Activated CD4-positive, alpha-beta memory T cell treated with anti-CD3 and anti-CD28 coated beads for 36 hours (primary cell): ENCODE measurements at regions of chr12 and their contacts with region 1.

Region 1: GRCh38 chr12:6771091-6771495 is 1.2 kb upstream of the LAG3 start:
- DNase-seq: peak; percentile 55
- H3K4me3 Mint-ChIP-seq: no peak overlapping the region
- H3K27ac Mint-ChIP-seq: peak overlapping the region; percentile 84
- H3K4me1 Mint-ChIP-seq: peaks cover 57% of the 10 kb centered on the region
- H3K27me3 Mint-ChIP-seq: peaks cover 13% of the 10 kb centered on the region

Region 2: GRCh38 chr12:6786416-6787094 is 15.5 kb after region 1 on chr12:
- CTCF ChIA-PET with region 1: interaction called, 47 read pairs
- POLR2A ChIA-PET with region 1: interaction called, 19 read pairs
- intact Hi-C with region 1: loop called (anchors 2 kb)
- DNase-seq: peak; percentile 34
- H3K4me3 Mint-ChIP-seq: peak overlapping the region; percentile 51
- H3K27ac Mint-ChIP-seq: peak overlapping the region; percentile 81
- H3K4me1 Mint-ChIP-seq: peaks cover 62% of the 10 kb centered on the region
- H3K27me3 Mint-ChIP-seq: no peaks in the 10 kb centered on the region

Region 3: DNA sequence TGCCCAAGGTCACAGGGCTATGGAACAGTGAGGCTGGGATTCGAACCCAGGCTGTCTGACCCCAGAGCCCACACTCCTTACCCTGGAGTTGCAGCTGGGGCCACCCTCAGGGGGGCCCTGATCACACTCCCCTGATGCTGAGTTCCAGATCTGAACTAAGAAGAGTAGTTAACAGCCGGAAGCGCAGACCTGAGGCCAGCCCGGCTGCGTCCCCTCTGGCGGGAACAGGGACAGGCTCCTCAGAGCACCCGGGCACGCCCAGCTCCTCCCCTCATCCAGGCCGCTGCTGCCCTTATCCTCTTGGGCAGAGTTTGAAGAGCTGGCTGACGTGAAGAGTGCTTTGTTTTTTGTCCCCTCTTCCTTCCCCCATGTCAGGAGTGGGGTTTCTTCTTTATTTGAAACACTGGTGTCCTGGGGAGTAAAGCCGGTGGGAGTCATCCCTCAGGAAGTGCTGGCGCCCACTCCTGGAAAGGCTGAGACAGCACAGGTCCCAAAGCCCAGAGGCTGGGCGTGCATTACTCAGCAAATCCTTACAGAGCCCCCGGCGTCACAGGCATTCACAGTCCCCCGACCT is 190.7 kb after region 1 on chr12:
- CTCF ChIA-PET with region 1: no interaction called
- POLR2A ChIA-PET with region 1: no interaction called
- intact Hi-C with region 1: no loop called
- DNase-seq: peak; percentile 80
- H3K4me3 Mint-ChIP-seq: peak overlapping the region; percentile 75
- H3K27ac Mint-ChIP-seq: peak overlapping the region; percentile 97
- H3K4me1 Mint-ChIP-seq: peaks cover 82% of the 10 kb centered on the region
- H3K27me3 Mint-ChIP-seq: no peaks in the 10 kb centered on the region

Region 4: DNA sequence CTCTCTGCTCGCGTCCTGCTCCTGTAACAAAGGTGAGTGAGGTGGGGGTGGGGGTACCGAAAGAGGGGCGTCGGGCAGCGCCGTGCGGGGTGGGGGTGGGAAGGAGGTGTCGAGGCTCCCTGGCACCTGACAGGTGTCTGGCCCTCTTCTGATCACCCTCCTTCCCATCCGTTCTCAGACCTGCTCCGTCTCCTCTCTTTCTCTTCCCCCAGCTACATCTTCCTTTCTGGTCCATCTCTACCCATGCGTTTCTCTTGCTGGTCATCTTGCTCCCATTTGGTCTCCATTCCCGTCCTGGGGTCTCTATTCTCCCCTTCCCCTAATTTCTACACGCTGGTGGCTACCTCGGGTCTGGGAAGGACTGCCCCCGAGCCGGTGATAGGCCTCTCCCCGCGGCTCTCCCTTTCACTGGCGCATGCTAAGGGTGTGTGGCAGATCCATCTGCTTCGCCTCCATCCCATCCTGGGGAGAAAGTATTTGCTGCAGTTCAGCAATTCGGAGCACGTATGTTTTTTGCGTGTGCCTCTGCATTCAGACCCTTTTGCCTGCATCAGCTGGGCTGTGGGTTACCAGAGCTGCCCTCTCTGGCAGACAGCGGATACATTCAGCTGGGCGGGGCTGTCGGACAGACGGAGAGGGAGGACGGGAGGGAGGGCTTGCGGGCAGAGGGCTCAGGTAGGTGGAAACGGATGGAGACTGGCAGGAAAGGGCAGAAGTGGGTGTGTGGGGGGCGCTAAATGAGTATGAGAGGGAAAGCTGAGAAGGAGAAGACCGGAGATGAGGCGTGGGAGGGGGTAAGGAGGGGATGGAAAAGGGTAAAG is 359.8 kb after region 1 on chr12:
- CTCF ChIA-PET with region 1: no interaction called
- POLR2A ChIA-PET with region 1: no interaction called
- intact Hi-C with region 1: no loop called
- DNase-seq: peak; percentile 79
- H3K4me3 Mint-ChIP-seq: peak overlapping the region; percentile 87
- H3K27ac Mint-ChIP-seq: peak overlapping the region; percentile 65
- H3K4me1 Mint-ChIP-seq: peaks cover 28% of the 10 kb centered on the region
- H3K27me3 Mint-ChIP-seq: no peaks in the 10 kb centered on the region